Activated B cell treated with CpG ODN at 0.5 μM for 24 hours (primary cell): ENCODE measurements at regions of chr2 and their contacts with region 1.

Region 1: GRCh38 chr2:70142590-70143313 is 48.1 kb downstream of the C2orf42 start:
- DNase-seq: peak; percentile 100
- ATAC-seq: peak; percentile 70
- H3K4me3 Mint-ChIP-seq: peak overlapping the region; percentile 86
- H3K27ac Mint-ChIP-seq: peak overlapping the region; percentile 100
- H3K4me1 Mint-ChIP-seq: peaks cover 37% of the 10 kb centered on the region
- H3K27me3 Mint-ChIP-seq: no peaks in the 10 kb centered on the region
- CTCF ChIP-seq: no peak

Region 2: DNA sequence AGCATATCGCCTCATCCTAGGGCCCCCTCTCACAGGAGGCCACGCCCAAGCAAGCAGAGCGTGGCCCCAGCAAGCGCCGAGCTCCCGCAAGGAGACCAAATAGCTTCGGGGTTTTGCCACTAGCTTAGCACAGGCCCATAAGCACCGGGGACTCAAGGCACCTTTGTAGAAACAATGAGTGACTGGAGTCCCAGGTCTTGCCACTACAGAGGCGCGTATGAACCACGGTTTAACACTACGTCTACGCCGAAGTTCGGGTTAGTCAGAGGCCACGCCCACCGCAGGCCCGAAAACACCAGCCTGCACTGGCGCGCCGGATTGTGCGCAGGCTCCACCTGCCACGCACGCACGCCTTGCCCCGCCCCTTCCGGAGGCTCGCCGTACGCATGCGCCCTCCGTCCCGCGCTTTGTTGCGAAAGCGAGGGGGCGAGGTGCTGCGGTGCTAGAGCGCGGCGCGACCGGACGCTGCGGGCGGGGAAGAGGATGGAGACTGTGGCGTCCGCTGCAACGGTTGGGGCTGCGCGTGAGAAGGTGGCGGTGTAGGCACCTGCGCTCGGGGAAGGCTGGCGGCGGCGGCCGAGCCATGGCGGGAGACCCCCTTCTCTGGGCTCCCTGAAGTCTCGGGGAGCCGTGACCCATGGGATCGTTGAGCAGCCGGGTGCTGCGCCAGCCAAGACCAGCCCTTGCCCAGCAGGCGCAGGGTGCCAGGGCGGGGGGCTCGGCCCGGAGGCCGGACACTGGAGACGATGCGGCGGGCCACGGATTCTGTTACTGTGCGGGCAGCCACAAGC is 313.3 kb before region 1 on chr2 and contains the start of gene GMCL1:
- CTCF ChIA-PET with region 1: no interaction called
- POLR2A ChIA-PET with region 1: no interaction called
- intact Hi-C with region 1: loop called (anchors 1 kb)
- DNase-seq: peak; percentile 99
- ATAC-seq: peak; percentile 95
- H3K4me3 Mint-ChIP-seq: peak within 1 kb of the TSS; percentile 94
- H3K27ac Mint-ChIP-seq: peak within 1 kb of the TSS; percentile 96
- H3K4me1 Mint-ChIP-seq: peaks cover 29% of the 10 kb centered on the region
- H3K27me3 Mint-ChIP-seq: no peaks in the 10 kb centered on the region
- CTCF ChIP-seq: no peak
- total RNA-seq, gene GMCL1: 8.0 and 13.0 TPM in 2 replicates

Region 3: DNA sequence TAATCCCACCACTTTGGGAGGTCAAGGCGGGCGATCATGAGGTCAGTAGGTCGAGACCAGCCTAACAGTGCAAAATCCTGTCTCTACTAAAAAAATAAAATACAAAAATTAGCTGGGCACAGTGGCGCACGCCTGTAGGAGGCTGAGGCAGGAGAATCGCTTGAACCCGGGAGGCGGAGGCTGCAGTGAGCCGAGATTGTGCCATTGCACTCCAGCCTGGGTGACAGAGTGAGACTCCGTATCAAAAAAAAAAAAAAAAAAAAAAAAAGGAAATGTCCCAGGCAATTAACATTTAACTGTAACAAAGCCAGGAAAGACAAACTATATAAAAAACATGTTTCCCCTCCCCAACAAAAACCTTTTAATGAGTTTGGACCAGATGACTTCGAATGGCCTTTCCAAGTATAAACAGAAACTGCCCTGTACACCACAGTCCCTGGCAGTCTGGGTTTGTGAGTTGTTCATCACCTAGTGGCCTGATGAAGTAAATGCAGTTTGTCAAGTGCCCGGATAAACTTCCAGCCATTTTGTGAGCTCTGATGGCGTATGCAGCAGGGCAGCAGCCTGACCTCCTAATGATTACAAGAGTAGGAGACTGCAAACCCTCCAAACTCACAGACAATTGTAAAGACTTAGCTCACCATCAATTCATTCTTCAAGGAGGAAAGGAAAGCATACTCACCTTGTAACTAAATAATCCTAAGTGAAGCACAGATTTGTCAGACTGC is 72.0 kb before region 1 on chr2:
- CTCF ChIA-PET with region 1: interaction called, 5 read pairs
- POLR2A ChIA-PET with region 1: interaction called, 976 read pairs
- intact Hi-C with region 1: loop called (anchors 1 kb)
- DNase-seq: no peak
- ATAC-seq: peak; percentile 92
- H3K4me3 Mint-ChIP-seq: peak overlapping the region; percentile 64
- H3K27ac Mint-ChIP-seq: peak overlapping the region; percentile 83
- H3K4me1 Mint-ChIP-seq: peaks cover 32% of the 10 kb centered on the region
- H3K27me3 Mint-ChIP-seq: no peaks in the 10 kb centered on the region
- CTCF ChIP-seq: peak; percentile 33

Region 4: GRCh38 chr2:70104231-70105111 is 38.3 kb before region 1 on chr2:
- CTCF ChIA-PET with region 1: interaction called, 8 read pairs
- POLR2A ChIA-PET with region 1: interaction called, 41 read pairs
- intact Hi-C with region 1: loop called (anchors 1 kb)
- DNase-seq: no peak
- ATAC-seq: no peak
- H3K4me3 Mint-ChIP-seq: peak overlapping the region; percentile 80
- H3K27ac Mint-ChIP-seq: peak overlapping the region; percentile 94
- H3K4me1 Mint-ChIP-seq: peaks cover 55% of the 10 kb centered on the region
- H3K27me3 Mint-ChIP-seq: no peaks in the 10 kb centered on the region
- CTCF ChIP-seq: no peak

Region 5: GRCh38 chr2:70132244-70133126 is 10.3 kb before region 1 on chr2:
- CTCF ChIA-PET with region 1: interaction called, 11 read pairs
- POLR2A ChIA-PET with region 1: interaction called, 358 read pairs
- intact Hi-C with region 1: loop called (anchors 1 kb)
- DNase-seq: no peak
- ATAC-seq: peak; percentile 72
- H3K4me3 Mint-ChIP-seq: peak overlapping the region; percentile 92
- H3K27ac Mint-ChIP-seq: peak overlapping the region; percentile 99
- H3K4me1 Mint-ChIP-seq: peaks cover 72% of the 10 kb centered on the region
- H3K27me3 Mint-ChIP-seq: no peaks in the 10 kb centered on the region
- CTCF ChIP-seq: no peak